ENCODE measurements at regions of chr5 and their contacts with region 1.

Region 1: GRCh38 chr5:136062366-136063274 is 33.8 kb downstream of the TGFBI start:
- DNase-seq: peak in 1 of 2 donors; percentile 2
- ATAC-seq: no peak
- H3K4me3 ChIP-seq: no peak overlapping the region
- H3K27ac ChIP-seq: no peak overlapping the region
- H3K4me1 ChIP-seq: peaks cover 0 to 3% of the 10 kb centered on the region in 2 donors
- H3K27me3 ChIP-seq: no peaks in the 10 kb centered on the region

Region 2: DNA sequence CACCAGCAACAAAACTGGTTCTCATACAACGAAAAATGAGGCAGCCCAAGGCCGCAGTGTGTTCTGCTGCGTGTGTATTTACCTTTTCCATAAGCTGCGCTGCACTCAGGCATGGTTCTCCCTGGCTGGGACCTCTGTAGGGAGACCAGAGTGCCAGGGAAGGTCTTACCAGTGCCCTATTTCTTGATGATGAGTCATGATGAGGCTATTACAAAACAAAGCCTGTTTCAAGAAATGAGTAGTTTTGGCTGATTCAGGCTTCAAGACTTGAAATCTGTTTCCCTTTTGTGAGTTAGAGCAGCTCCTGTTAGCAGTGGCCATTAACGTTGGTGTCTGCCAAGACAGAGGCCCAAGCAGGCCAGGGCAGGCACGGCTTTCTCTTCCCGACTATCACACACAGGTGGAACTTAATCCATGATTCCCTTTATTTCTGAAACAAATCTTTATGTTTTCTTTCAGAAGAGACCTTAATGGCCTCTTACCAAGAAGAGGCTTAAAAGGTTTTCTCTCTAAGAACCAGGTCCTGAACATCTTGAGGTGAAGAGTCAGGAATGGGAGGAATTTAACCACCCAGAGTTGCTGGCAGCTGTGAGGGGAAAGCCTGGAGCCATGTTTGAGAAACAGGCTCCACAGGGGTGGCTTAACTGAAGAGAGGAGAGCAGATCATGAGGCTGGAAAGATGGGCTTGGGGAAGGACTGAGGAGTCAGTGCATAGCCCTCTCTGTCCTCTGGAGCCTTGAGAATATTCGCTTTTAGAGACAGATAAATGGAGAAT is 569.0 kb before region 1 on chr5:
- intact Hi-C with region 1: no loop called
- DNase-seq: peak in 1 of 2 donors; percentile 65
- ATAC-seq: peak; percentile 40
- H3K4me3 ChIP-seq: no peak overlapping the region
- H3K27ac ChIP-seq: peak overlapping the region in 1 of 2 donors; percentile 37
- H3K4me1 ChIP-seq: no peaks in the 10 kb centered on the region
- H3K27me3 ChIP-seq: no peaks in the 10 kb centered on the region

Region 3: GRCh38 chr5:135834639-135835529 is 227.7 kb before region 1 on chr5 and contains the start of gene SLC25A48:
- intact Hi-C with region 1: no loop called
- DNase-seq: peak in 1 of 2 donors; percentile 79
- ATAC-seq: peak; percentile 53
- H3K4me3 ChIP-seq: no peak within 1 kb of the TSS
- H3K27ac ChIP-seq: no peak within 1 kb of the TSS
- H3K4me1 ChIP-seq: no peaks in the 10 kb centered on the region
- H3K27me3 ChIP-seq: peaks cover 0 to 2% of the 10 kb centered on the region in 2 donors
- total RNA-seq, gene SLC25A48: 0.42 to 1.1 TPM

Region 4: DNA sequence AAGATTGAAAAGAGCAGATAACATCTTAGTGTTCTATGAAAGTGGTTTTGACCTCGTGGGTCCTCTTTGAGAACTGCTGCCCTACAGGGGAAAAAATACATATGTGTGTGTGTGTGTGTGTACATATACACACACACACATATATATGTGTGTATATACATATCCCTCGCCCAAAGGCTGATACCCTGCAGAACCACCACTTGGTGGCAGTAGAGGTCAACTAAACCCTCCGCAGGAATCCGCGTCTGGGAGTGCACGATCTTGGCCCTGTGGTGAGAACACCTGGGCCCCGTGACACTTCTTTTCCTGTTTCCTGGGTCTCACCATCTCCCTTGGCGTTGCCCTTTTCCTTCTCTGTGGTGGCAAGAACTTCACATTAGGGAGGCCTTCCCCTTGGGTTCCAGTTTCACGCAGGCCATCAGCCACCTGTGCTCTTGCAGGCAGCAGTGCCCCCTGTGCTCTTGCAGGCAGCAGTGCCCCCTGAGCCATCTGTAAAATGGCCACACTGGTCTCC is 175.2 kb before region 1 on chr5:
- intact Hi-C with region 1: loop called in 1 of 2 experiments (anchors 5 kb)
- DNase-seq: no peak
- ATAC-seq: peak; percentile 73
- H3K4me3 ChIP-seq: no peak overlapping the region
- H3K27ac ChIP-seq: no peak overlapping the region
- H3K4me1 ChIP-seq: no peaks in the 10 kb centered on the region
- H3K27me3 ChIP-seq: no peaks in the 10 kb centered on the region

Region 5: DNA sequence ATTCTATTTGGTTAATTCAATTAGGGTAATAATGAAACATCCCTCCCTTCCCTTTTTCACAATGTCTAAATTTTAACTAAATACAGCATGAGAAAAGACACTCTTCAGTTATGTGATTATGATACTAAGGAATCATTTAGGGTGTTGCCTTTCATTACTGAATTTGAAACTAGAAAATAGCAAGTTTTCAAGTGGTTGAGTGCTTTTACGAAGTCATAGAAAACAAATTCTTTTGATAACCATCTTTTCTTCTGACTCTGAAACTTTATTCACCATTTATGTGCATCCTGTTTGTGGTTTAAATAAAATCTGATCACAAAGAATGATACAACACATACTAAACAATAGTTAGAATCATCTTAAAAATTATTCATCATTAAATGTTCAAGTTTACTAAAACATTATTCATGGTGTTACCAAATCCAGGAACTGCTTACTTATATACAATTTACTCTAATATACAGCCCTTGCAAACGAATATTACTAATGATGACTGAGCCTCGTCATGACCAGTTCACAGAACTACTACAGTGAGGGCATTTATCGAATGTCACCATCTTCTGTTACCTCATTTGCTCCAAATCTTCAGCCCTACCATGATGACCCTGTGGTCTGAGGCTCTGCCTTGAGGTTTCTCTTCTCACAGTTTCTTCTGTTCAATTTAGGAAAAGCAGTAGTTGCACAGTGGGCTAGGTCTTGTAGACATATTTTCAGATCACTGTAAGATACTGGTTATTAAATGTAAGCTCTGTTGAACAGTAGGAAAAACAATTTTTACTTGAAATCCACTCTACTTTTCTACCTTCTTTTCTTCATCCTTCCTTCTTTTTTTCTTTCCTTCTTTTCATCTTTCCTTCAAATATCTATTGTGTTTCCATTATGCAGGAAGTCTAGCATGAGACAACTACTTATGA is 148.7 kb before region 1 on chr5:
- intact Hi-C with region 1: no loop called
- DNase-seq: no peak
- ATAC-seq: no peak
- H3K4me3 ChIP-seq: no peak overlapping the region
- H3K27ac ChIP-seq: no peak overlapping the region
- H3K4me1 ChIP-seq: no peaks in the 10 kb centered on the region
- H3K27me3 ChIP-seq: no peaks in the 10 kb centered on the region

Region 6: GRCh38 chr5:135944967-135945560 is 117.6 kb before region 1 on chr5:
- intact Hi-C with region 1: loop called (anchors 5 to 10 kb)
- DNase-seq: no peak
- ATAC-seq: peak; percentile 73
- H3K4me3 ChIP-seq: no peak overlapping the region
- H3K27ac ChIP-seq: no peak overlapping the region
- H3K4me1 ChIP-seq: no peaks in the 10 kb centered on the region
- H3K27me3 ChIP-seq: no peaks in the 10 kb centered on the region

Region 7: GRCh38 chr5:135986891-135987401 is 75.7 kb before region 1 on chr5:
- intact Hi-C with region 1: loop called in 1 of 2 experiments (anchors 2 kb)
- DNase-seq: peak in 1 of 2 donors; percentile 9
- ATAC-seq: peak; percentile 60
- H3K4me3 ChIP-seq: no peak overlapping the region
- H3K27ac ChIP-seq: peak overlapping the region; percentile 79 to 82
- H3K4me1 ChIP-seq: peaks cover 7 to 12% of the 10 kb centered on the region in 2 donors
- H3K27me3 ChIP-seq: no peaks in the 10 kb centered on the region

Region 8: GRCh38 chr5:136018814-136019783 is 43.5 kb before region 1 on chr5:
- intact Hi-C with region 1: loop called in 1 of 2 experiments (anchors 5 kb)
- DNase-seq: no peak
- ATAC-seq: no peak
- H3K4me3 ChIP-seq: no peak overlapping the region
- H3K27ac ChIP-seq: peak overlapping the region in 1 of 2 donors; percentile 65
- H3K4me1 ChIP-seq: peaks cover 5 to 21% of the 10 kb centered on the region in 2 donors
- H3K27me3 ChIP-seq: no peaks in the 10 kb centered on the region

Region 9: GRCh38 chr5:136025900-136026299 is 36.7 kb before region 1 on chr5:
- intact Hi-C with region 1: loop called in 1 of 2 experiments (anchors 2 kb)
- DNase-seq: peak in 1 of 2 donors; percentile 84
- ATAC-seq: peak; percentile 81
- H3K4me3 ChIP-seq: no peak overlapping the region
- H3K27ac ChIP-seq: peak overlapping the region; percentile 34 to 84
- H3K4me1 ChIP-seq: peaks cover 0 to 8% of the 10 kb centered on the region in 2 donors
- H3K27me3 ChIP-seq: no peaks in the 10 kb centered on the region

Region 10: DNA sequence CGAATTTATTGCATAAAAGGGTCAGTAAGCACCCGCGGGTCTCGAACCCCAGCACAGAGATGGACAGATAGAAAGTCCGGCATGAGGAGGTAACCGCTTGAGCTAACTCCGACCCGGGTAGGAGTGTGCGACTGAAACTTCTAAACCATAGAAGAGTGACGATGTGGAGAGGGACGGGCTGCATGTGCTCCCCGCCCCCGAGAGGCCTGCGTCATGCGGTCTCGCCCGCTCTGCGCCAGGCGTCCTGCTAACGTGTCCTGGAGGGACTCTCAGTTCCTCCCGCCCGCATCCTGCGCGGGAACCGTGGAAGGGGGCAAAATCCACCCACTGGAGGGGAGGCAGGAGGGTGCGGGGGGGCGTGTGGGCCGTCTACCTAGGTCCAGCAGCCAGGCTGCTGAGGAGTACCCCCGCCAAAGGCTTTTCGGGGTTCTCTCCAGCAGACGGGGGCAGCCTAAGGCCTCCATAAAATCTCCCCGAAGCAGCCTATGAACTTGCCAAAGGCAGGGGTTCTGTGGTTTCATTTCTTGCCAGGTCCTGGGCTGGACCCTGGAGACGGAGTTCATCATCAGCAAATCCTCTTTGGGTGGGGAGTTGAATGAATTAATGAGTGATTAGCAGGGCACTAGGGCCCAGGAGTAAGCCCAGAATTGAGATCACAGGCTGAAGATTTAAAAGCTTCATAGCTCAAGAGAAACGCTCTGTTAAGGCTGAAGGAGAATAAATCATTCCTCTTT is 18.0 kb after region 1 on chr5:
- intact Hi-C with region 1: loop called in 1 of 2 experiments (anchors 1 kb)
- DNase-seq: peak; percentile 92 to 95
- ATAC-seq: peak; percentile 96
- H3K4me3 ChIP-seq: peak overlapping the region in 1 of 2 donors; percentile 37
- H3K27ac ChIP-seq: peak overlapping the region in 1 of 2 donors; percentile 22
- H3K4me1 ChIP-seq: no peaks in the 10 kb centered on the region
- H3K27me3 ChIP-seq: no peaks in the 10 kb centered on the region

Region 11: GRCh38 chr5:136123236-136123768 is 60.7 kb after region 1 on chr5:
- intact Hi-C with region 1: no loop called
- DNase-seq: no peak
- ATAC-seq: no peak
- H3K4me3 ChIP-seq: no peak overlapping the region
- H3K27ac ChIP-seq: no peak overlapping the region
- H3K4me1 ChIP-seq: no peaks in the 10 kb centered on the region
- H3K27me3 ChIP-seq: no peaks in the 10 kb centered on the region